T-cell (primary cell): ENCODE measurements at regions of chr19 and their contacts with region 1.

Region 1: DNA sequence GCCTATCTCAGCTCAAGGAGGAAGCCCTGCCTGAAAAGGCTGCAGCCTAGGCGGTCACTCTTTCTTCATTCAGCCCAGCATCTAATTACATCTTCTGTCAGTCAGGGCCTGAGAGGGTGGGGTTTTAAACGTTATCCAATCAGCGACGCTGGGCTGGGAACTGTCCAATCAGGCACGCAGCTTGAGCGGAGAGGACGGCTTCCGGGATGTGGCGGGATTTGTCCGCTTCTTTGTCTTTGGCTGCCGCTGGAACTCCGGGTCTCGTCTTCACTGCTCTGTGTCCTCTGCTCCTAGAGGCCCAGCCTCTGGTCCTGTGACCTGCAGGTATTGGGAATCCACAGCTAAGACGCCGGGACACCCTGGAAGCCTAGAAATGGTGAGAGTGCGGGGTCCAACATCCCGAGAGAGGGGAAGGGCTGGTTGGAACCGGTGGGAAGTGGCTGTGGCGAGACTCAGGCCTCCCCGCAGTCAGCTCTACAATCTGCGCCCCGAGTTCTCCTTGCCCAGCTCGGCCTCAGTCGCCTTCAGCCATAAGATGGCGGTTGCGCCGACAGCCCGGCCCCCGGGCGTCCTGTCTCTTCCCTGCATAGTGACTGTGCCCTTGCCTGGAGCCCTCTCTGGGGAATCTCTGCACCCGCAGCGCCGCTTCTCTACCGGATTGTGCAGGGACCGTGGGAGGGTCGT is at the start of gene ZNF738:
- DNase-seq: peak; percentile 62 to 89 (median 81)
- ATAC-seq: peak; percentile 94 to 99 (median 97)
- H3K4me3 ChIP-seq: peak within 1 kb of the TSS; percentile 87 to 98
- H3K4me3 Mint-ChIP-seq: peak within 1 kb of the TSS; percentile 97 to 99 (median 99)
- H3K27ac ChIP-seq: peak within 1 kb of the TSS; percentile 83
- H3K27ac Mint-ChIP-seq: peak within 1 kb of the TSS; percentile 92 to 95
- H3K4me1 ChIP-seq: peaks cover 3 to 15% of the 10 kb centered on the region in 2 experiments
- H3K4me1 Mint-ChIP-seq: peaks cover 10 to 18% (median 13%) of the 10 kb centered on the region in 3 donors
- H3K27me3 ChIP-seq: no peaks in the 10 kb centered on the region
- H3K27me3 Mint-ChIP-seq: no peaks in the 10 kb centered on the region
- total RNA-seq, gene ZNF738: 4.4 to 10.4 (median 8.2) TPM

Region 2: DNA sequence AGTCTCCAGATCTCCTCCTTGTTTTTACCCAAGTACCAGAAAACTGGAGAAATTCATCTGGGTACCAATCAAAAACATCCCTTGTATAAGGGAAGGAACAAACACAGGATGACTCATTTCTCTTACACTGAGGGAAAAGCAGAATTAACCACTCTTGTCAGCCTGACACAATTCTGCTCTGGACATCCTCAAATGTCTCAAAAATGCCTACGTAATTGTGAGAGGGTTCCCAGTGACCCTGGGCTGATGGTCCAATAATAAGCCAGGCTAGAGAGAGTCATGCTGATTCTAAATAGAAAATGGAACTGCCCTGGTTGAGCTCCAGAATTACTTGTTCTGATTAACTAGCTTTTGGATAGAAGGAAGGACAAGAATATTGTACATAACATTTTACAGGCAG is 44.2 kb before region 1 on chr19:
- CTCF ChIA-PET with region 1: no interaction called
- POLR2A ChIA-PET with region 1: no interaction called
- DNase-seq: no peak
- ATAC-seq: no peak
- H3K4me3 ChIP-seq: no peak overlapping the region
- H3K4me3 Mint-ChIP-seq: no peak overlapping the region
- H3K27ac ChIP-seq: no peak overlapping the region
- H3K27ac Mint-ChIP-seq: peak overlapping the region; percentile 15 to 66
- H3K4me1 ChIP-seq: peaks cover 0 to under 1% of the 10 kb centered on the region in 2 experiments
- H3K4me1 Mint-ChIP-seq: peaks cover 48 to 58% (median 56%) of the 10 kb centered on the region in 3 donors
- H3K27me3 ChIP-seq: no peaks in the 10 kb centered on the region
- H3K27me3 Mint-ChIP-seq: no peaks in the 10 kb centered on the region

Region 3: DNA sequence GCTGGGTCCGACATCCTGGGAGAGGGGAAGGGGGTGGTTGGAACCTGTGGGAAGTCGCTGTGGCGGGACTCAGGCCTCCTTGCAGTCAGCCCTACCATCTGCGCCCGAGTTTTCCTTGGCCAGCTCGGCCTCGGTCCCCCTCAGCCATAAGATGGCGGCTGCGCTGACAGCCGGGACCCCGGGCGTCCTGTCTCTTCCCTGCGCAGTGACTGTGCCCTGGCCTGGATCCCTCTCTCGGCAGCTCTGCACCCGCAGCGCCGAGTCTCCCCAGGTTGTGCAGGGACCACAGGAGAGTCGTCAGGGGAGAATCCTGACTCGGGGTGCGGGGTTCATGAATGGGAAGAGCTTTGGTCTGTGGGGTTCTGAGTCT is 693.7 kb after region 1 on chr19:
- CTCF ChIA-PET with region 1: interaction called in 1 of 2 experiments, 10 read pairs
- POLR2A ChIA-PET with region 1: no interaction called
- DNase-seq: peak in 14 of 35 experiments; percentile 1 to 28 (median 8)
- ATAC-seq: peak; percentile 40 to 53 (median 48)
- H3K4me3 ChIP-seq: peak overlapping the region; percentile 54 to 79
- H3K4me3 Mint-ChIP-seq: peak overlapping the region; percentile 91 to 96 (median 93)
- H3K27ac ChIP-seq: no peak overlapping the region
- H3K27ac Mint-ChIP-seq: peak overlapping the region; percentile 76 to 91
- H3K4me1 ChIP-seq: peaks cover 0 to 6% of the 10 kb centered on the region in 2 experiments
- H3K4me1 Mint-ChIP-seq: peaks cover 0 to 14% (median 5%) of the 10 kb centered on the region in 3 donors
- H3K27me3 ChIP-seq: peaks cover 0 to 5% of the 10 kb centered on the region in 2 experiments
- H3K27me3 Mint-ChIP-seq: peaks cover 0 to 3% of the 10 kb centered on the region in 2 donors